K562 (cell line): ENCODE measurements at regions of chr16 and their contacts with region 1.

Region 1: GRCh38 chr16:2537453-2538379 is at the start of gene PDPK1:
- DNase-seq: peak; percentile 89 to 96 (median 92)
- ATAC-seq: peak; percentile 93
- H3K4me3 ChIP-seq: peak within 1 kb of the TSS; percentile 73
- H3K27ac ChIP-seq: peak within 1 kb of the TSS; percentile 81
- H3K4me1 ChIP-seq: peaks cover 12 to 30% of the 10 kb centered on the region in 2 experiments; a peak in 4 of 5 replicates
- H3K27me3 ChIP-seq: no peaks in the 10 kb centered on the region
- CTCF ChIP-seq: no peak
- EP300 ChIP-seq: no peak
- POLR2A ChIP-seq: no peak
- RAD21 ChIP-seq: no peak
- polyA plus RNA-seq, gene PDPK1: 4.0 to 4.6 TPM

Region 2: DNA sequence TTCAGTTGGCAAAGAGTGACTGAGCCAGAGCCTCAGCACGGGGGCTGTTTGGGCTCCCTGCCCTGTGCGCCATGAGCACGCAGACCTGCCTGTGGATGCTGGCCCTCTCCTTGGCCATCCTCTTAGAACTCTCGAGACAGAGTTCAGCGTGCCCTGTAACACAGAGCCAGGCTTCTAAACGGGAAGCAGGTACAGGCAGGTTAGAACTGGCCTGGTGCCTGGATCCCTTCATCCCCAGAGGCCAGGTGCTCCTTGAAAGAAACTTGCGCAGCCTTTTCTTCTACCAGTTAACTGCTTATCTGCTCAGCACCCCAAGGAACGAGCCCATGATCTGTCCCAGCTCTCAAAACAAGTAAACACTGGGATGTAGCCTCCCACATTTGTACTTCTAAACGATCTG is 101.6 kb before region 1 on chr16:
- CTCF ChIA-PET with region 1: no interaction called
- POLR2A ChIA-PET with region 1: no interaction called
- in situ Hi-C with region 1: no loop called
- intact Hi-C with region 1: no loop called
- DNase-seq: no peak
- ATAC-seq: no peak
- H3K4me3 ChIP-seq: no peak overlapping the region
- H3K27ac ChIP-seq: no peak overlapping the region
- H3K4me1 ChIP-seq: peaks cover 1 to 6% of the 10 kb centered on the region in 2 experiments; a peak in 3 of 5 replicates
- H3K27me3 ChIP-seq: no peaks in the 10 kb centered on the region
- CTCF ChIP-seq: no peak
- EP300 ChIP-seq: no peak
- POLR2A ChIP-seq: no peak
- RAD21 ChIP-seq: no peak

Region 3: GRCh38 chr16:2474877-2475412 is 62.8 kb before region 1 on chr16 and contains the start of gene TBC1D24:
- CTCF ChIA-PET with region 1: no interaction called
- POLR2A ChIA-PET with region 1: no interaction called
- in situ Hi-C with region 1: no loop called
- intact Hi-C with region 1: no loop called
- DNase-seq: peak; percentile 88 to 97 (median 96)
- ATAC-seq: peak; percentile 69
- H3K4me3 ChIP-seq: peak within 1 kb of the TSS; percentile 76
- H3K27ac ChIP-seq: peak within 1 kb of the TSS; percentile 88
- H3K4me1 ChIP-seq: peaks cover 44 to 95% of the 10 kb centered on the region in 2 experiments
- H3K27me3 ChIP-seq: no peaks in the 10 kb centered on the region
- CTCF ChIP-seq: no peak
- EP300 ChIP-seq: no peak
- POLR2A ChIP-seq: no peak
- RAD21 ChIP-seq: no peak
- polyA plus RNA-seq, gene TBC1D24: 1.7 to 4.2 TPM

Region 4: DNA sequence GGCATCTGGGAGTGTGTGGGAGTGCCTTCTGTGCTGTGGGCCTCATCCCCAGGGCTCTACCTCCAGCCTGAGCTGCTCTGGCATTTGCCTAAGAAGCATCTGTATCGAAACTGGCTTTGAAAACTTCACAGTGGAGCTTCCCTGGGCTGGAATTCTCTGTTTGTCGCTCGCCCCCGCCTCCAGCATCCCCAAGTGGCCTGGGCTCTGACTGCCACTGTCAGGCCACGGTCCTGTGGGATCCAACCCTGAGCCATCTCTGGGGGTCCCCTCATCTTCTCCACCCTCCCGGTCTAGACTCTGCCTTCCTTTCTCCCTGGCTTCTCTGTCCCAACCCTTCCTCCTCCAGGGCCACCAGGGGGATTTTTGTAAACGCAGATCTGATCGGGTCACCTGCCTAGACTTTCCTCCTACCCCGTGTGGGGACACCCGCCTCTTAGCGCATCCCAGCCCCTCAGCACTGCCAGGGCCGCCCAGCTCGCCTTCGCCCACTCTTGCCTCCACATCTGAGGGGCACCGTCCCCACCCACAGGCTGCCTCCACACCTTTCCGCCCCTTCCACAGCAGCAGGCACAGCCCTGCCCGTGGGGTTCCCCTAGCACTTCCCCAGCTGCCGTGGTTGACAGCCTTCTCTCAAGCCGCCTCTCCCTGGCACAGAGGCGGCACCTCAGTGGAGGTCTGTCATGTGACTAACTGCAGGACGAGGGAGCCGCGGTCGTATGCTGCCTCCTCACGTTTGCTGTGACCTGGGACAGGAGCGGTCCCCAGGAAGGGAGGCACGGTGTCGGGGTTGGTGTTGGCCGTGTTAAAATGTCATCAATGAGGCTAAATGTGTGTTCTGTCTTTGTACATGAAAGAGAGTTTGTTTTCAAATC is 50.8 kb before region 1 on chr16:
- CTCF ChIA-PET with region 1: no interaction called
- POLR2A ChIA-PET with region 1: no interaction called
- in situ Hi-C with region 1: no loop called
- intact Hi-C with region 1: no loop called
- DNase-seq: no peak
- ATAC-seq: no peak
- H3K4me3 ChIP-seq: no peak overlapping the region
- H3K27ac ChIP-seq: no peak overlapping the region
- H3K4me1 ChIP-seq: peaks cover 24 to 77% of the 10 kb centered on the region in 2 experiments
- H3K27me3 ChIP-seq: no peaks in the 10 kb centered on the region
- CTCF ChIP-seq: no peak
- EP300 ChIP-seq: no peak
- POLR2A ChIP-seq: no peak
- RAD21 ChIP-seq: no peak

Region 5: DNA sequence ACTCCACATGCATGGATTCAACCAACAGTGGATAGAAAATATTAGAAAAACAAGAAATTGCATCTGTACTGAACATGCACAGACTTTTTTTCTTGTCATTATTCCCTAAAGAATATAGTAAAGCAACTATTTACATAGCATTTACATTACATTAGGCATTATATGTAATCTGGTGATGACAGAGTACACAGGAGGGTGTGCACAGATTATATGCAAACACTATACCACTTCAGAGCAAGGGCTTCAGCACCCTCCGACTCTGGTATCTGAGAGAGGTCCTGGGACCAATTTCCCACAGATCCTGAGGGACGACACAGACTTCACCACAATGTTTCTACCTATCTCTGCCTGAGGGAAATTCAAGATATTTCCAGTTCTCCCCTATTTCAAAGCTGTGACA is 119.3 kb after region 1 on chr16:
- CTCF ChIA-PET with region 1: no interaction called
- POLR2A ChIA-PET with region 1: no interaction called
- in situ Hi-C with region 1: loop called (anchors 5 kb)
- intact Hi-C with region 1: no loop called
- DNase-seq: no peak
- ATAC-seq: no peak
- H3K4me3 ChIP-seq: no peak overlapping the region
- H3K27ac ChIP-seq: no peak overlapping the region
- H3K4me1 ChIP-seq: no peaks in the 10 kb centered on the region
- H3K27me3 ChIP-seq: no peaks in the 10 kb centered on the region; a peak in 1 of 5 replicates
- CTCF ChIP-seq: no peak
- EP300 ChIP-seq: no peak
- POLR2A ChIP-seq: no peak
- RAD21 ChIP-seq: no peak

Region 6: GRCh38 chr16:2955779-2956578 is 418.3 kb after region 1 on chr16:
- CTCF ChIA-PET with region 1: no interaction called
- POLR2A ChIA-PET with region 1: no interaction called
- in situ Hi-C with region 1: no loop called
- intact Hi-C with region 1: no loop called
- DNase-seq: no peak
- ATAC-seq: no peak
- H3K4me3 ChIP-seq: no peak overlapping the region
- H3K27ac ChIP-seq: no peak overlapping the region
- H3K4me1 ChIP-seq: peaks cover 0 to 47% of the 10 kb centered on the region in 2 experiments; a peak in 3 of 5 replicates
- H3K27me3 ChIP-seq: peaks cover 12 to 32% of the 10 kb centered on the region in 2 experiments
- CTCF ChIP-seq: no peak
- EP300 ChIP-seq: no peak
- POLR2A ChIP-seq: no peak
- RAD21 ChIP-seq: no peak